Gastrocnemius medialis (tissue), 4 donors: ENCODE measurements at regions of chr4 and their contacts with region 1.

Region 1: GRCh38 chr4:168480931-168481611 is 779 bp upstream of the DDX60L start:
- DNase-seq: peak in 1 of 2 donors; percentile 45
- ATAC-seq: peak; percentile 65 to 84
- H3K4me3 ChIP-seq: peak overlapping the region; percentile 72 to 96 (median 79)
- H3K27ac ChIP-seq: peak overlapping the region; percentile 87 to 91 (median 88)
- H3K4me1 ChIP-seq: peaks cover 11 to 21% of the 10 kb centered on the region in 2 donors
- H3K27me3 ChIP-seq: no peaks in the 10 kb centered on the region
- CTCF ChIP-seq: no peak
- POLR2A ChIP-seq: no peak

Region 2: DNA sequence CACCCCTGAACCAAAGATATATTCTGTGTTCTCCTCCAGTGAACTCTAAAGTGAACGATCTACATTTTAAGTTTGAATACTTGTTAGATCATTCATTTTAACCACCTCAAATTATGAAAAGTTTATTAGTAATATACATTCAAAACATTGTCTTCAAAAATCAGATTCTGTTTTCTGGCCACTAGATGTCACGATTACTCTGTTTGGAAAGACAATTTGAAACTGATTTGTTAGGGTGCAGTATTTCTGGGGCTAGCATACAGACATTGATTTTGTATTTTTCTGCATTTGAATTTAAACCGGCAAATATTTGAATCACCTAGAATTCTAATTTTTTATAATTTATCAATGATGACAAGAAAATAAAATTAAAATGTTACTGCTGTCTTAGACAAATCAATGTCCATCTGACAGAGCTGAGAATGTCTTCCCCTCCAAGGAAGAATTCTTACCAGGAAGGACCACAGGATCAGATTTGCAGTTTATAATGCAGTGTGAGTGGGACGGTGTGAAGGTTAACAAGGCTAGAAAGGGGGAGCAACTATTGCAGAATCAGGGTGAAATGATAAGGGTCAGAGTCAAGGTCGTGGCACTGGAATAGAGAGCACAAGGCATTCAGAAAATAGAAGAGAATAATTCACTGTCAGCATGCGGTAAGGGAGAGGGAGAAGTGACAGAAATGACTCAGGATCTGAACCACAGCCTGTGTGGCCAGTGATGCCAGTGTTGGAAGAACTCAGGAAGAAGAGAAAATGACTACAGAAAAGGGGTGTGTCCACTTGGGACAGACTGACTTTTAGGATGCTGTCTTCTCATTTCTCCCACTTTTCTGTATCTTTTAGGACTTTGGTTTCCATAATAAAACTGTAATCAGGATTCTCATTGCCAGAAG is 297.1 kb before region 1 on chr4:
- in situ Hi-C with region 1: no loop called
- intact Hi-C with region 1: loop called (anchors 10 kb)
- DNase-seq: no peak
- ATAC-seq: peak in 1 of 2 donors; percentile 19
- H3K4me3 ChIP-seq: no peak overlapping the region
- H3K27ac ChIP-seq: no peak overlapping the region
- H3K4me1 ChIP-seq: no peaks in the 10 kb centered on the region
- H3K27me3 ChIP-seq: no peaks in the 10 kb centered on the region
- CTCF ChIP-seq: peak in 4 of 5 experiments; percentile 44 to 72 (median 65)
- POLR2A ChIP-seq: no peak

Region 3: DNA sequence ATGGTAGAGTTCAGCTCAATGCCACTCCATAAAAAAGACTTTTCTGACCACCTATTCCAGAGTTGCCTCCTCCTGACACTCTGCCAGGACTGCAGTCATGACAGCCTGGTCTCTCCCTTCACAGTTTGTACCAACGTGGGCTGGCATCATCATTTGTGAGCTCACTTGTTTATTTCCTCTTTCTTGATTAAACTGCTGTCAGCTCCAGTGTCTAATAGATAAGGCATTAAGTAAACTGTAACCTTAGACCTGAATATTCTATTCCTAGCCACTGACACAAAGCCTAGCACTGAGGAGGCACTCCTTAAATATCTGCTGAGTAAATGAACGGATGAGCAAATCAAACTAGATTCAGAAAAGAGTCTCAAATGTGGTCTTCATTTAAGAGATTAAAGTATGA is 211.2 kb before region 1 on chr4:
- in situ Hi-C with region 1: no loop called
- intact Hi-C with region 1: loop called (anchors 5 kb)
- DNase-seq: peak; percentile 20 to 42
- ATAC-seq: peak; percentile 84 to 90
- H3K4me3 ChIP-seq: no peak overlapping the region
- H3K27ac ChIP-seq: peak overlapping the region; percentile 20 to 75 (median 72)
- H3K4me1 ChIP-seq: peaks cover 34 to 44% of the 10 kb centered on the region in 2 donors
- H3K27me3 ChIP-seq: no peaks in the 10 kb centered on the region
- CTCF ChIP-seq: no peak
- POLR2A ChIP-seq: no peak

Region 4: DNA sequence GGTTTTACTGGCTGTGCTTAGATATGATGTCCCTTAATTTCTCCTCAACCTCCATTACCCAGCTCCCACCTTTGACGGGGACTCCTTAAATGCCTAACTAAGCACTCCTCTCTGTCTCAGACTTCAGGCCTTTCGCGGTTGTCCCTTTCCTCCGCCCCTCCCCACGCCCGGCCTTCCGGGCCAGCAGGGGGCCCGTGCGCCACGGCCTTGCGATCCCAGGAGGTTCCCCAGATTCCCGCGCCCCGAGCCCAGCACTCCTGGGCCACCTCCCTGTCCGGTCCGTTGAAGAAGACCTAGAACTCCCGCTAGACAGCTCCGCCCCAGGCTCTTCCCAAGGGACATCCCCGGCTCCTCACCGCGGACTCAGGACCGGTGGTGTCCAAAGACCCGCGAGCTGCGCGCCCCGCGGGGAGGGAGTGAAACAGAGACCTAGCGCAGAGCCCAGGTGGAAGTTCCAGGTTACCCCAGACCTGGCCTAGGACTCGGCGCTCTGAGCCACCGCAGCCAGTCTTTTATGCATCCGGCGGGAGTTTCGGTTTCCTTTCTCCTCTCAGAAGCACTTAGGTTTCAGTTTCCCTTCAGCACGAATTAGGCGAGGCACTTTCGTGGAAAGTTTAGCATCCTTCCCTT is 162.7 kb before region 1 on chr4 and contains the start of gene DDX60:
- in situ Hi-C with region 1: no loop called
- intact Hi-C with region 1: loop called (anchors 2 kb)
- DNase-seq: peak; percentile 23 to 57
- ATAC-seq: peak; percentile 81 to 96
- H3K4me3 ChIP-seq: peak within 1 kb of the TSS; percentile 73 to 95 (median 92)
- H3K27ac ChIP-seq: peak within 1 kb of the TSS; percentile 86 to 88 (median 87)
- H3K4me1 ChIP-seq: peaks cover 0 to 8% of the 10 kb centered on the region in 2 donors
- H3K27me3 ChIP-seq: no peaks in the 10 kb centered on the region
- CTCF ChIP-seq: peak in 4 of 5 experiments; percentile 11 to 64 (median 41)
- POLR2A ChIP-seq: no peak
- total RNA-seq, gene DDX60: 1.6 to 12.1 (median 3.6) TPM

Region 5: GRCh38 chr4:168408620-168409019 is 72.5 kb before region 1 on chr4:
- in situ Hi-C with region 1: no loop called
- intact Hi-C with region 1: loop called (anchors 5 kb)
- DNase-seq: peak; percentile 71 to 74
- ATAC-seq: peak; percentile 98
- H3K4me3 ChIP-seq: peak overlapping the region in 1 of 4 donors; percentile 3
- H3K27ac ChIP-seq: peak overlapping the region; percentile 69 to 72 (median 71)
- H3K4me1 ChIP-seq: peaks cover 28 to 39% of the 10 kb centered on the region in 2 donors
- H3K27me3 ChIP-seq: no peaks in the 10 kb centered on the region
- CTCF ChIP-seq: no peak
- POLR2A ChIP-seq: peak in 1 of 2 donors; percentile 23

Region 6: GRCh38 chr4:168917138-168917779 is 436.2 kb after region 1 on chr4:
- in situ Hi-C with region 1: no loop called
- intact Hi-C with region 1: loop called (anchors 10 kb)
- DNase-seq: no peak
- ATAC-seq: peak in 1 of 2 donors; percentile 31
- H3K4me3 ChIP-seq: no peak overlapping the region
- H3K27ac ChIP-seq: peak overlapping the region in 3 of 4 donors; percentile 28 to 49 (median 47)
- H3K4me1 ChIP-seq: peaks cover 0 to 6% of the 10 kb centered on the region in 2 donors
- H3K27me3 ChIP-seq: no peaks in the 10 kb centered on the region
- CTCF ChIP-seq: peak; percentile 48 to 82 (median 64)
- POLR2A ChIP-seq: no peak